ENCODE measurements at regions of chr9 and their contacts with region 1.

Region 1: GRCh38 chr9:5958273-5958672 is 57.2 kb downstream of the RANBP6 start:
- DNase-seq: no peak
- ATAC-seq: no peak
- H3K4me3 ChIP-seq: no peak overlapping the region
- H3K27ac ChIP-seq: no peak overlapping the region
- H3K4me1 ChIP-seq: no peaks in the 10 kb centered on the region
- H3K27me3 ChIP-seq: no peaks in the 10 kb centered on the region
- CTCF ChIP-seq: no peak
- POLR2A ChIP-seq: no peak
- RAD21 ChIP-seq: no peak

Region 2: DNA sequence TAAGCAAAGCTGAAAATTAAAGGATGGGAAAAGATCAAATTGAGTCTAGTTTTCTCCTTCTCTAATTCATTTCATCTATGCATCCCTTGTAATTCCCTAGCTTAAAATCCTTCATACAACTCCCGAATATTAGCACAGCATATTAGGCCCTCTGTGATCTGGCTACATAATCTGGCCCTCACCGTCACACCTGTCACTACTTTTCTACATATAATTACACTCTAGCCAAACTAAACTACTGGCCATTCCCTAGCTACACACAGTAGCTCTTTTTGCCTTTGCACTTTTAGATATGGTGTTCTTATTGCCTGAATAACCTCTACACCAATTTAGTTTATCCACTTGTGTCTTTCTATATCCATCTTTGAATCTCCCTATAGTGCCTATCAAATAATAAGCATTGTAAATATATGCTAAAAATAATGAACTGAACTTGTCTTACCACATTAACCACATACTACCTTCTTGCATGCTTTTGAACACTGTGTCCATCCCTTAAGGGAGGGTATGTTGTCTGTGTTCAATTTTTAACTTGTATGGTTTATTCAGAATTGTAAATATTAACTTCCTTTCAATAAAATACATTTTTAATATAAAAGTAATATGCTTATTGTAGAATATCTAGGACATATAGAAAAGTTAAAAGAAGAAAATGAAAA is 41.3 kb after region 1 on chr9:
- CTCF ChIA-PET with region 1: no interaction called
- POLR2A ChIA-PET with region 1: no interaction called
- dilution Hi-C with region 1: no loop called
- in situ Hi-C with region 1: no loop called
- intact Hi-C with region 1: loop called (anchors 5 kb)
- DNase-seq: no peak
- ATAC-seq: no peak
- H3K4me3 ChIP-seq: no peak overlapping the region
- H3K27ac ChIP-seq: no peak overlapping the region
- H3K4me1 ChIP-seq: no peaks in the 10 kb centered on the region
- H3K27me3 ChIP-seq: no peaks in the 10 kb centered on the region
- CTCF ChIP-seq: no peak
- POLR2A ChIP-seq: no peak
- RAD21 ChIP-seq: no peak

Measured in IMR-90 (cell line).